PC-3 (cell line): ENCODE measurements at regions of chr10 and their contacts with region 1.

Region 1: GRCh38 chr10:101512738-101513137 is 75.3 kb downstream of the POLL start:
- DNase-seq: peak; percentile 34
- ATAC-seq: 0 out of 2 replicates have a peak, but pooled peaks have one; percentile 37
- H3K4me3 ChIP-seq: no peak overlapping the region
- H3K27ac ChIP-seq: no peak overlapping the region
- H3K4me1 ChIP-seq: no peaks in the 10 kb centered on the region
- H3K27me3 ChIP-seq: no peaks in the 10 kb centered on the region
- CTCF ChIP-seq: no peak

Region 2: GRCh38 chr10:100710151-100710871 is 802.4 kb before region 1 on chr10:
- CTCF ChIA-PET with region 1: no interaction called
- POLR2A ChIA-PET with region 1: no interaction called
- intact Hi-C with region 1: no loop called
- DNase-seq: no peak
- ATAC-seq: no peak
- H3K4me3 ChIP-seq: no peak overlapping the region
- H3K27ac ChIP-seq: no peak overlapping the region
- H3K4me1 ChIP-seq: no peaks in the 10 kb centered on the region
- H3K27me3 ChIP-seq: peaks cover 41% of the 10 kb centered on the region
- CTCF ChIP-seq: no peak

Region 3: GRCh38 chr10:101671453-101671852 is 158.7 kb after region 1 on chr10:
- CTCF ChIA-PET with region 1: interaction called, 12 read pairs
- POLR2A ChIA-PET with region 1: interaction called, 3 read pairs
- intact Hi-C with region 1: no loop called
- DNase-seq: no peak
- ATAC-seq: no peak
- H3K4me3 ChIP-seq: no peak overlapping the region
- H3K27ac ChIP-seq: no peak overlapping the region
- H3K4me1 ChIP-seq: no peaks in the 10 kb centered on the region
- H3K27me3 ChIP-seq: no peaks in the 10 kb centered on the region
- CTCF ChIP-seq: no peak